AG04449 (cell line): ENCODE measurements at regions of chr17 and their contacts with region 1.

Region 1: GRCh38 chr17:63425482-63425881 is 20.6 kb downstream of the CYB561 start:
- DNase-seq: no peak
- H3K4me3 ChIP-seq: no peak overlapping the region
- CTCF ChIP-seq: peak; percentile 77

Region 2: DNA sequence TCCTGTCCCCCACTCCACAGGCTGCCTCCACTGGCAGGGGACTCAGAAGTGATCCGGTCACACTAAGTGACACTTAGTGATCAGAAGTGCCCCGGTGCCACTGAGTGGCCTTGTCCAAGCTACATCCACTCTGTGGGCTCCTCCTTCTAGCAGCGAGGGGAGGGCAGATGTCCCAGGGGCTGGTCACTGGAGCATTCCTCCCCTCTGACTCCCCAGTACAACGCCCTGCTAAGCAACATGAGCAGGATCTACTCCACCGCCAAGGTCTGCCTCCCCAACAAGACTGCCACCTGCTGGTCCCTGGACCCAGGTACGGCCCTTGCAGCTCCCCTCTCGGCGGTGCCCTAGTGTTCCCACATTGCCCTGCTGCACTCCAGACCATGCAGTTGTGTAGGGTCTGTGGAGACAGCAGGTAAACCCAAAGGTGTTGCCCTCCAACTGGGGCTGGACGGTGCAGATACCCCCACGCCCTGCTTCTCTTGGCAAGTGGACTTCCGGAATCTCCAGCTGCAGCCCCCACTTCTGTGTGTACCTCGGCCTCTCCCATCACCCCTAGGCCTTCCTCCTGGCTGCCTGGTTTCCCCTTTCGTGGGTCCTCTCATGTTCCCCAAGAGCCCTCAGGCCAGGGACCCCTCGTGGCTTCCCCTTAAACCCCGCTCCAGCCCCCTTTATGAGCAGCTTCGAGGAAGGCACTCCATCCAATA is 53.5 kb after region 1 on chr17:
- CTCF ChIA-PET with region 1: interaction called, 251 read pairs
- POLR2A ChIA-PET with region 1: interaction called, 3 read pairs
- DNase-seq: peak; percentile 65
- H3K4me3 ChIP-seq: peak overlapping the region; percentile 8; the same call in 1 of the 2 replicates
- CTCF ChIP-seq: peak; percentile 99

Region 3: DNA sequence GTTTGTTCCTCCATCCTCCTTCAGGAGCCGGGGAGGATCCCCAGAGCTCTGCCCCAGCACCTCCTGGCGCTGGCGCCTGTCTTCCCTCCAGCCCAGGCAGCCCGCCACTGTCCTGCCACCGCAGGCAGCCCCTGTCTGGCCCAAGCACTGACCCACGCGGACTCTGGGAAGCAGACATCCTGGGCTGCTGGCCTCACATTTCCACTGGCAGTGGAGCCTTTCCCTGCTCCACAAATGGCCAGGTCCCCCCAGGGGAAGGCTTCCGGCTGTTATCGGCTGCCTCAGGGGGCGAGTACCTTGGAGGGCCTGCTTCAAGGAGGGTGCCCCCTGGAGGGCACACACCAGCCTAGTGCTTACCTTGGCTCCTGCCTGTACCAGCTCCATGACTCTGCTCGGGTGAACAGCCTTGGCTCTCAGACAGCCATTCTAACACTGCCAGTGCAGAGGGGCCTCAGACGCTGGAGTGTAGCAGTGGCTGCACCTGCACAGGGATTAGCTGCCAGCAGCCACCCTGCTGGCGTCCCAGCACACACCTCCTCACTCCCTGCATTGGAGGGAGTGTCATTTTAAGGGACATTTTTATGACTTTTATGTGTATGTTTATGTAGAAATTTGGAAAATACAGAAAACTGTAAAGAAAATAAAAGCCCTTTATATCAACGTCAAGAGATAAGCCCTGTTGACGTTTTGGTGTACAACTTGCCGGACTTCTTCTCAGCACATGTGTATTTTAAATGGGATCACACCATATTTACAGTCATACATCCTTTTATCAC is 72.4 kb after region 1 on chr17:
- CTCF ChIA-PET with region 1: interaction called, 11 read pairs
- POLR2A ChIA-PET with region 1: no interaction called
- DNase-seq: no peak
- H3K4me3 ChIP-seq: no peak overlapping the region
- CTCF ChIP-seq: peak; percentile 24

Region 4: GRCh38 chr17:63589646-63590045 is 164.2 kb after region 1 on chr17:
- CTCF ChIA-PET with region 1: interaction called, 12 read pairs
- POLR2A ChIA-PET with region 1: no interaction called
- DNase-seq: no peak
- H3K4me3 ChIP-seq: no peak overlapping the region
- CTCF ChIP-seq: no peak

Region 5: DNA sequence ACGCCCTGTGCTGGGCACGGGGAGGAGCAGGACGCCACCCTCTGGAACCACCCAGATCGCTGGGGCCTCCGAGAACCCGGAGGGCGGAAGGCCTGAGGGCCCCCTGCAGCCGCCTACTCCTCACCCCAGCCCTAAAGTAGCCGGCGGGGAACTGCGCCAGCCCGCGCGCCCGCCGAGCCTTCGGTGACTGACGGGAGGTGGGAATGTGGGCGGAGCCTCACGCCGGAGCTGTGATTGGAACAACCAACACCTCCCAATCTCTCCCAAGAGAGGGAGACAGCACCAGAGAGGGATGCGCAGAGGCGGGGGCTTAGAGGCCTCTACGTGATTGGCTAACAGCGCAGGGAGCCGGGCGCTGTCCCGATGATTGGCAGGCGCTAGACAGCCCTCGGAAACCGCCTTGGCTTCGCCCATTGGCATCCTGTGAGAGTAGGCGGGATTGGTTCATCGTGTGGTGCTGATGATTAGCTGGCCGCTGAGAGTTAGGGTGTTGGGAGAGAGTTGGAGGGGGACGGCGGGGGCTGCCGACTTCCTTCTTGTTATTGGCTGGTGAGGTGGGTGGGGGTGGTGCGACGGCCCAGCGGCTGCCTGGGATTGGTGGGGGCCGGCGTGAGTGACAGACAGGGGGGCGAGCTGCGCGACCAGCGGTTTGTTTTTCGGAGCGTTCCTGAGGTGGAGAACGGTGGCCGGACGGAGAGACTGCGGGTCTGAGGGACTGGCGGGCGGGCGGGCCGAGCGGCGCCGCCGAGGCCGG is 196.5 kb after region 1 on chr17 and contains the start of gene MAP3K3:
- CTCF ChIA-PET with region 1: interaction called, 398 read pairs
- POLR2A ChIA-PET with region 1: no interaction called
- DNase-seq: peak; percentile 99
- H3K4me3 ChIP-seq: peak within 1 kb of the TSS; percentile 80
- CTCF ChIP-seq: no peak